SK-N-SH (cell line): ENCODE measurements at regions of chr15 and their contacts with region 1.

Region 1: GRCh38 chr15:62360332-62361097 is 195.4 kb upstream of the C2CD4B start:
- DNase-seq: peak; percentile 56
- H3K4me3 ChIP-seq: no peak overlapping the region
- H3K27ac ChIP-seq: peak overlapping the region in 1 of 2 experiments; percentile 31; a peak in 1 of 4 replicates
- H3K4me1 ChIP-seq: peaks cover 0 to 3% of the 10 kb centered on the region in 2 experiments; a peak in 1 of 4 replicates
- H3K27me3 ChIP-seq: no peaks in the 10 kb centered on the region
- CTCF ChIP-seq: no peak
- EP300 ChIP-seq: no peak
- RAD21 ChIP-seq: no peak

Region 2: DNA sequence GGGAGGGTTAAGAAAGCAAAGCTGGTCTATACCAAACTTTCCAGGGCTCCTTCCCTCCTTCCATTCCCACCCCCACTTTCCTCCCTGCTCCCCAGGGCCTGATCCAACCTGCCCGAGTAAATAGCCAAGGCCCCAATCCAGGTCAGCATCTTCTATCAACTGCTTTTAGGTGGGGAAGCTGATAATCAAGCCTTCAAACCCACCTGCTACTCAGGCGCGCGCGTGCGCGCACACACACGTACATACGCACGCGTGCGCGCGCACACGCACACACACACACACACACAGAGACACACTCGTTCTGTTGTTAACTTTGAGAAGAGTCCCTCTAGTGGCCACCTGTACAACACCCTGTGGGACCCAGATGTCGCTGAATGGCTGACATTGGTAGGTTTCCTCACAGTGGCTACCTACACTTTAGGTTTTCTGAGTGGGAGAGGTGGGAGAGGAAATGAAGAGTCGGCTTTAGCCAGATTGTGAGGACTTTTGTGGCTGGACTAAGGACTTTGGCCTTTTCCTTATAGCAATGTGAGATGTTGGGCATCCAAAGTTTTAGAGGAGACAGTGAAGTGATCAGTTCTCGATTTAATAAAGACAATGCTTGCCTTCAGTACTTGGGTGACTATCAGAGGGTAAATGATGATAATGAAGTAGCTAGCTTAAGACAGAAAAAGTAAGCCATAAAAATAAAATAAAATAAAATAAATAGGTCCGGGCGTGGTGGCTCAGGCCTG is 15.5 kb before region 1 on chr15:
- CTCF ChIA-PET with region 1: interaction called, 14 read pairs
- POLR2A ChIA-PET with region 1: no interaction called
- DNase-seq: peak; percentile 76
- H3K4me3 ChIP-seq: no peak overlapping the region; a peak in 1 of 4 replicates
- H3K27ac ChIP-seq: no peak overlapping the region
- H3K4me1 ChIP-seq: no peaks in the 10 kb centered on the region
- H3K27me3 ChIP-seq: no peaks in the 10 kb centered on the region
- CTCF ChIP-seq: peak; percentile 61
- EP300 ChIP-seq: no peak
- RAD21 ChIP-seq: peak; percentile 64